ENCODE measurements at regions of chr10 and their contacts with region 1.

Region 1: GRCh38 chr10:90087197-90088007 is 386.0 kb downstream of the KIF20B start:
- DNase-seq: peak; percentile 87
- ATAC-seq: peak; percentile 99
- H3K4me3 ChIP-seq: no peak overlapping the region
- H3K27ac ChIP-seq: peak overlapping the region; percentile 87
- H3K4me1 ChIP-seq: peaks cover 14% of the 10 kb centered on the region
- H3K27me3 ChIP-seq: no peaks in the 10 kb centered on the region
- CTCF ChIP-seq: no peak

Region 2: GRCh38 chr10:89954787-89955566 is 132.4 kb before region 1 on chr10:
- CTCF ChIA-PET with region 1: no interaction called
- POLR2A ChIA-PET with region 1: no interaction called
- intact Hi-C with region 1: loop called (anchors 10 kb)
- DNase-seq: peak; percentile 45
- ATAC-seq: no peak
- H3K4me3 ChIP-seq: no peak overlapping the region
- H3K27ac ChIP-seq: no peak overlapping the region
- H3K4me1 ChIP-seq: no peaks in the 10 kb centered on the region
- H3K27me3 ChIP-seq: no peaks in the 10 kb centered on the region
- CTCF ChIP-seq: peak; percentile 60

Region 3: DNA sequence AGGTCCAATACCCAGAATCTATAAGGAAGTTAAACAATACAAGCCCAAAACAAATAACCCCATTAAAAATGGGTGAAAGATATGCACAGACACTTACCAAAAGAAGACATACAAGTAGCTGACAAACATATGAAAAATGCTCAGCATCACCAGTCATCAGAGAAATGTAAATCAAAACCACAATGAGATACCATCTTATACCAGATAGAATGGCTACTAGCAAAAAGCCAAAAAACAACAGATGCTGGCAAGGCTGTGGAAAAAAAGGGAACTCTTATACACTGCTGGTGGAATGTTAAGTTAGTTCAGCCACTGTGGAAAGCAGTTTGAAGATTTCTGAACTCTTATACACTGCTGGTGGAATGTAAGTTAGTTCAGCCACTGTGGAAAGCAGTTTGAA is 54.9 kb before region 1 on chr10:
- CTCF ChIA-PET with region 1: no interaction called
- POLR2A ChIA-PET with region 1: no interaction called
- intact Hi-C with region 1: no loop called
- DNase-seq: peak; percentile 47
- ATAC-seq: peak; percentile 18; the same call in 1 of the 2 replicates
- H3K4me3 ChIP-seq: no peak overlapping the region
- H3K27ac ChIP-seq: no peak overlapping the region
- H3K4me1 ChIP-seq: no peaks in the 10 kb centered on the region
- H3K27me3 ChIP-seq: no peaks in the 10 kb centered on the region
- CTCF ChIP-seq: no peak

Region 4: DNA sequence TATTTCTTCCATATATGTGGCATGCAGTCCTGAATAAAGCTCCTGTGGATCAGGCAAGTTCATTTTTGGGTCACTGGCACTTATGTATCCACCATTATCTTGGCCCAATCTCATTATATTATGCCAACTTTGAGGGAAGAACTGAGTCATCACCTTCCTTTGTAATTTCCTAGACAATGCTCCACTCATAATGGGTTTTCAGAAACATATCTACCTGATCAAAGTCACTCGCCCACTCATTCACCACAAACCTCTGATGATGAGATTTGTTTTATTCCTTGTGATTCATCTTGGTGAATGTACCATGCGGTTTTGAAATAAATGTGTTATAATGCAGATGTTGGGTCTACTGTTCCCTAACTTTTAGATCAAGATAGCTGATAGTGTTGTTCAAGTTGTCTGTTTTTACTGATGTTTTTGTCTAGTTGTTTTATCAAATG is 139.8 kb after region 1 on chr10:
- CTCF ChIA-PET with region 1: no interaction called
- POLR2A ChIA-PET with region 1: no interaction called
- intact Hi-C with region 1: loop called (anchors 5 kb)
- DNase-seq: peak; percentile 93
- ATAC-seq: peak; percentile 85
- H3K4me3 ChIP-seq: no peak overlapping the region
- H3K27ac ChIP-seq: peak overlapping the region; percentile 96
- H3K4me1 ChIP-seq: peaks cover 37% of the 10 kb centered on the region
- H3K27me3 ChIP-seq: no peaks in the 10 kb centered on the region
- CTCF ChIP-seq: no peak

Region 5: DNA sequence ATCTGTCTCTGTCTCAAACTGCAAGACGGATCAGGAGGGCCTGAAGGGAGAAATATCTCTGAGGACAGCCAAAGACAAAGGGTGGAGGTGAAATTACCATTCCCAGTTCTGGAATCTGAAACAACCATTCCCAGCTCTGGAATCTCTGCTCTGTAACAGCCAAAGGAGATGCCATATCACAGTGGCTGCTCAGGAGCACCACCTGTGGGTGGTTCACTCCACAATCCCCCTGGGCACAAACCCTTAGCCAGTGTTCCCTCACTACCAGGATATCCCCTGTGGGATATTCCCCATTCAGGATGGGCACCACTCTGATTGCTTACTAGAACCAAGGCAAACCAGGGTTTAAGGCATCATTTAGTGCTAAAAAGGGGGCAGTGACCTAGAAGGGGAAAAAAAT is 571.4 kb after region 1 on chr10:
- CTCF ChIA-PET with region 1: interaction called, 11 read pairs
- POLR2A ChIA-PET with region 1: no interaction called
- intact Hi-C with region 1: no loop called
- DNase-seq: peak; percentile 4
- ATAC-seq: no peak
- H3K4me3 ChIP-seq: no peak overlapping the region
- H3K27ac ChIP-seq: no peak overlapping the region
- H3K4me1 ChIP-seq: no peaks in the 10 kb centered on the region
- H3K27me3 ChIP-seq: no peaks in the 10 kb centered on the region
- CTCF ChIP-seq: peak; percentile 41

Region 6: DNA sequence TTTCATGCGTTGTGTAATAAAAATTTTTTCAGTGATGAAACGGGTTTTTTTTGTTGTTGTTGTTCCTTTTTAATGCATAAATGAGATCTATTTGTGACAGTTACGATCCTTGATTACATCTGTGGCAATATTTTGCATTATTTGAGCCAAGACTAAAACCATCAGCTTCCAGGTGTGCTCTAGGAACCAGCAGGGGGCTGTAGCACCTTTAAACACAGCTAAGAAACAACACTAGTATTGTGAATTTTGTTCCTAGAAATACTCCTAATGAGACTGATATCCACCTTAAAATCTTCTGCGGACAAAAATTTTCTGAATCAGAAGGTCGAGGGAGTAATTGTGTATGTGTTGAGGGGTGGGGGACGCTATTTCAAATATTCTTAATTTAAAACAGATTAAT is 1769.2 kb after region 1 on chr10:
- CTCF ChIA-PET with region 1: no interaction called
- POLR2A ChIA-PET with region 1: interaction called, 17 read pairs
- intact Hi-C with region 1: no loop called
- DNase-seq: peak; percentile 39
- ATAC-seq: no peak
- H3K4me3 ChIP-seq: no peak overlapping the region
- H3K27ac ChIP-seq: no peak overlapping the region
- H3K4me1 ChIP-seq: no peaks in the 10 kb centered on the region
- H3K27me3 ChIP-seq: no peaks in the 10 kb centered on the region
- CTCF ChIP-seq: peak; percentile 68

Measured in PC-3 (cell line).